Right lobe of liver (tissue), 6 donors: ENCODE measurements at regions of chr14 and their contacts with region 1.

Region 1: GRCh38 chr14:88168498-88169165 is 154.4 kb downstream of the KCNK10 start:
- DNase-seq: peak in 1 of 3 donors; percentile 53
- ATAC-seq: peak; percentile 96 to 98 (median 98)
- H3K4me3 ChIP-seq: no peak overlapping the region
- H3K27ac ChIP-seq: no peak overlapping the region
- H3K4me1 ChIP-seq: no peaks in the 10 kb centered on the region
- H3K27me3 ChIP-seq: no peaks in the 10 kb centered on the region
- CTCF ChIP-seq: peak; percentile 67 to 76 (median 69)
- POLR2A ChIP-seq: no peak

Region 2: DNA sequence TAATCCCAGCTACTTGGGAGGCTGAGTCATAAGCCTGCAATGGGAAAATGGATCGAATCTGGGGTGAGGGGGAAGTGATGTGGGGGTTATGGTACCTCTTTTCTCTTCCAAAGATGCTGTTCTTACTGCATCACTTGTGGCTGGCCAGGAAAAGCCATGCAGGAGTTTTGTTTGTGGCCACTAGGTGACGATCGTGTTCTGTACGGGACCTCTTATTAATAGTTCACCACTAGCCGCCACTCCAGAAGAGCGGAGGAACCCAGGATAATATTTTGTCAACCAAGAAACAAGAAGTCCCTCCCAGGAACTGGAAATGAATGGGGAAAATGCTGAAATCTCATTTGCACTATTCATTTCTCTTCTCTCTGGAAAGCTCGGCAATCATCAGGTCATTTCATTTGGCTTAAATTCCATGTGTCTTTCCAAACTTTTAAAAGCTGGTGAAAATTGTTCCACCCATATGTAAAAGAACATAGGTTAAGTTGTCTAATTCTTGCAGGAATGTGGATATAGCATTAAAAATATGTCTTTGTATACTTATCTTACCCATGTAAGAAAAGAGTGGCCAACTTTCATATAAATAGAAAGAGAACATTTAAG is 154.8 kb before region 1 on chr14:
- intact Hi-C with region 1: loop called (anchors 5 to 10 kb)
- DNase-seq: peak; percentile 49 to 79 (median 62)
- ATAC-seq: peak; percentile 99 to 100 (median 100)
- H3K4me3 ChIP-seq: no peak overlapping the region
- H3K27ac ChIP-seq: no peak overlapping the region
- H3K4me1 ChIP-seq: no peaks in the 10 kb centered on the region
- H3K27me3 ChIP-seq: no peaks in the 10 kb centered on the region
- CTCF ChIP-seq: peak; percentile 94 to 98 (median 96)
- POLR2A ChIP-seq: no peak